MCF 10A (cell line): ENCODE measurements at regions of chr5 and their contacts with region 1.

Region 1: GRCh38 chr5:134738133-134738962 is at the start of gene CAMLG:
- DNase-seq: peak; percentile 99
- H3K4me3 Mint-ChIP-seq: peak within 1 kb of the TSS; percentile 97
- H3K27ac Mint-ChIP-seq: peak within 1 kb of the TSS; percentile 95
- H3K4me1 Mint-ChIP-seq: peaks cover 17% of the 10 kb centered on the region
- H3K27me3 Mint-ChIP-seq: no peaks in the 10 kb centered on the region
- CTCF ChIP-seq: peak; percentile 55
- total RNA-seq, gene CAMLG: 38.3 and 41.8 TPM in 2 replicates

Region 2: GRCh38 chr5:134527146-134527960 is 211.0 kb before region 1 on chr5:
- CTCF ChIA-PET with region 1: no interaction called
- POLR2A ChIA-PET with region 1: interaction called, 4 read pairs
- intact Hi-C with region 1: loop called (anchors 5 kb)
- DNase-seq: peak; percentile 93
- H3K4me3 Mint-ChIP-seq: peak overlapping the region; percentile 91
- H3K27ac Mint-ChIP-seq: peak overlapping the region; percentile 49
- H3K4me1 Mint-ChIP-seq: peaks cover 50% of the 10 kb centered on the region
- H3K27me3 Mint-ChIP-seq: no peaks in the 10 kb centered on the region
- CTCF ChIP-seq: peak; percentile 94

Region 3: GRCh38 chr5:134626369-134627014 is 111.9 kb before region 1 on chr5:
- CTCF ChIA-PET with region 1: interaction called, 4 read pairs
- POLR2A ChIA-PET with region 1: interaction called, 15 read pairs
- intact Hi-C with region 1: no loop called
- DNase-seq: peak; percentile 84
- H3K4me3 Mint-ChIP-seq: peak overlapping the region; percentile 22
- H3K27ac Mint-ChIP-seq: peak overlapping the region; percentile 53
- H3K4me1 Mint-ChIP-seq: peaks cover 30% of the 10 kb centered on the region
- H3K27me3 Mint-ChIP-seq: no peaks in the 10 kb centered on the region
- CTCF ChIP-seq: no peak

Region 4: GRCh38 chr5:134692722-134693121 is 45.6 kb before region 1 on chr5:
- CTCF ChIA-PET with region 1: no interaction called
- POLR2A ChIA-PET with region 1: interaction called, 22 read pairs
- intact Hi-C with region 1: no loop called
- DNase-seq: no peak
- H3K4me3 Mint-ChIP-seq: no peak overlapping the region
- H3K27ac Mint-ChIP-seq: no peak overlapping the region
- H3K4me1 Mint-ChIP-seq: peaks cover 10% of the 10 kb centered on the region
- H3K27me3 Mint-ChIP-seq: no peaks in the 10 kb centered on the region
- CTCF ChIP-seq: no peak

Region 5: DNA sequence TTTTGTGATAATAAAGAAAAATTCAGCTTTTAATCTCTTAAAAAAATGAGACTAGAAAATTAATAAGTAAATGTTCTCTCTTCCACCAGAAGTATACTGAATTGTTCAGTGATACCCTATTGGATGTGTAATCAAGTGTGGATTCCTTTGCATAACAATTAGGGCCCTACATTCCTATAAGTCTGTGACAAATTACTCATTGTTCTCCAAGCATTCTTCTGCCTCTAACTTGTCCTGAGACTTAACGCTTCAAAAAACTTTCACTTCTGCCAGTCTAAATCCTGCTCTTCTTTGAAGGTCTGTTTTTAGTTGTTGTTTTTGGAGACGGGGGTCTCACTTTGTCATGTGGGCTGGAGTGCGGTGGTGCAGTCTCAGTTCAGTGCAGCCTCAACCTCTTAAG is 11.1 kb after region 1 on chr5:
- CTCF ChIA-PET with region 1: interaction called, 71 read pairs
- POLR2A ChIA-PET with region 1: interaction called, 156 read pairs
- intact Hi-C with region 1: no loop called
- DNase-seq: no peak
- H3K4me3 Mint-ChIP-seq: no peak overlapping the region
- H3K27ac Mint-ChIP-seq: no peak overlapping the region
- H3K4me1 Mint-ChIP-seq: no peaks in the 10 kb centered on the region
- H3K27me3 Mint-ChIP-seq: no peaks in the 10 kb centered on the region
- CTCF ChIP-seq: no peak

Region 6: DNA sequence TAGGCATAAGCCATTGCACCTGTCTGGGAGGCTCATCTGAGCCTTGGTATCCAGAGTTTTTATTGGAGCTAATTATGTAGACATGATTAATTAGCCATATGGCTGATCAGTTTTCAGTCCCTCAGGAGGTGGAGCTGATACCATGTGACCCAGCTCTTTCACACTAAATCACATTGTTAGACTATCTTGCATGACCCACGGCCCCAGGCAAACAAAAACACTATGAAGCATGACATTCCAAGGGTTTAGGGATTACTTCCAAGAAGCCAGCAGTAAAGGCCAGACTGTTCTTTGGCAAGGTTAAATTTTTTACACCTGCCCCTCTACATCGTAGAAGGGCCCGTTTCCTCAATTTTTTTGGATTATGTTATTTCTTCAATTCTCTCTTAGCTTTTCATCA is 102.5 kb after region 1 on chr5:
- CTCF ChIA-PET with region 1: interaction called, 3 read pairs
- POLR2A ChIA-PET with region 1: interaction called, 17 read pairs
- intact Hi-C with region 1: no loop called
- DNase-seq: no peak
- H3K4me3 Mint-ChIP-seq: no peak overlapping the region
- H3K27ac Mint-ChIP-seq: no peak overlapping the region
- H3K4me1 Mint-ChIP-seq: peaks cover 22% of the 10 kb centered on the region
- H3K27me3 Mint-ChIP-seq: no peaks in the 10 kb centered on the region
- CTCF ChIP-seq: no peak

Region 7: DNA sequence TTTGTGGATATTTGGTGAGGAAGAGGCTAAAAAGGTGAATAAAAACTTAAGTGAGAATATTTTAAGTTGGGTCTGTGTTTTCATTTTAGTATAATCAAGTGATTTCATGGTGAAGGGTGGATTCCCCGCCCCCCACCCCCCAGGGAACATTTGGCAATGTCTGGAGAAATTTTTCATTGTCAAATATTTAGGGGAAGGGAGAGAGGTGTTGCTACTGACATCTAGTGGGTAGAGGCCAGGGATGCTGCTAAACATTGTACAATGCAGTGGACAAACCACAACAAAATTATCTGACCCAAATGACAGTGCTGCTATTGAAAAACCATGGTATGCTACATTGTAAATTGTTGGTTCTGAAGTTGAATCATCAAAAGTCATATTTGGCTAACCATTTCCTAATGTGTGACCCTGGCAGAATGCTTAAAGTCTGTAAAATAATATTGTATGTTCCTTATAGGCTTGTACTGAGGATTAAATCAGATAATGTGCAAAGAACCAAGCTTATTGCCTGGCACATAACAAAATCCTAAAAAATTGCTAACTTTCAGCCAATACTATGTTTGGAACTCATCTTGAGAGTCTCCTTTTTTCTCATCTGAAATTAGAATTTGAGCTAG is 113.1 kb after region 1 on chr5:
- CTCF ChIA-PET with region 1: interaction called, 3 read pairs
- POLR2A ChIA-PET with region 1: interaction called, 7 read pairs
- intact Hi-C with region 1: loop called (anchors 1 kb)
- DNase-seq: peak; percentile 81
- H3K4me3 Mint-ChIP-seq: no peak overlapping the region
- H3K27ac Mint-ChIP-seq: peak overlapping the region; percentile 18
- H3K4me1 Mint-ChIP-seq: peaks cover 7% of the 10 kb centered on the region
- H3K27me3 Mint-ChIP-seq: no peaks in the 10 kb centered on the region
- CTCF ChIP-seq: peak; percentile 58